Psoas muscle (tissue), 8 donors: ENCODE measurements at regions of chr2 and their contacts with region 1.

Region 1: DNA sequence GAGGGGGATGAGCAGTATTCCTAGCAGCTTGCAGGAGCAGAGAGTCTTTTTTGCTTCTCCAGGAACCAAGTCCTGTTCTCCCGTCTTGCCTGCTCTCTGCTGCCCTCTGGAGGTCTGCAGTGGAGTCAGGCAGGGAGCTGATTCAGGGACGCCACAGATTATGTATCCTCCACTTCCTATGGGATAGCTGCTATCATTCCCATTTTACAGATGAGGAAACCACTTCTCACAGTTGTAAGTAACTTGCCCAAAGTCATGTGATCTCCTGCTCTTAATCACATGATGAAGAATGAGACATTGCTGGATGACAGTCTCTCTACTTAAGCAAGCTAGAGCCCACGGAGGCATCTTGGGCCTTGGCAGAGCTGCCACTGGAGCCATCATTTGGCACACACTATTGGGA is 8.3 kb downstream of the SLC4A5 start:
- DNase-seq: peak; percentile 75 to 84
- ATAC-seq: peak; percentile 85 to 89 (median 87)
- H3K4me3 ChIP-seq: no peak overlapping the region
- H3K27ac ChIP-seq: no peak overlapping the region
- H3K4me1 ChIP-seq: no peaks in the 10 kb centered on the region
- H3K27me3 ChIP-seq: no peaks in the 10 kb centered on the region
- CTCF ChIP-seq: peak; percentile 95

Region 2: GRCh38 chr2:74250189-74250631 is 84.7 kb before region 1 on chr2:
- intact Hi-C with region 1: loop called in 1 of 2 experiments (anchors 2 kb)
- DNase-seq: peak; percentile 27 to 64
- ATAC-seq: peak in 3 of 4 donors; percentile 53 to 69 (median 57)
- H3K4me3 ChIP-seq: no peak overlapping the region
- H3K27ac ChIP-seq: no peak overlapping the region
- H3K4me1 ChIP-seq: no peaks in the 10 kb centered on the region
- H3K27me3 ChIP-seq: no peaks in the 10 kb centered on the region
- CTCF ChIP-seq: peak; percentile 69

Region 3: GRCh38 chr2:74278176-74278575 is 56.8 kb before region 1 on chr2:
- intact Hi-C with region 1: no loop called
- DNase-seq: no peak
- ATAC-seq: no peak
- H3K4me3 ChIP-seq: no peak overlapping the region
- H3K27ac ChIP-seq: no peak overlapping the region
- H3K4me1 ChIP-seq: no peaks in the 10 kb centered on the region
- H3K27me3 ChIP-seq: no peaks in the 10 kb centered on the region
- CTCF ChIP-seq: no peak